Heart right ventricle (tissue), 16 donors: ENCODE measurements at regions of chr16 and their contacts with region 1.

Region 1: DNA sequence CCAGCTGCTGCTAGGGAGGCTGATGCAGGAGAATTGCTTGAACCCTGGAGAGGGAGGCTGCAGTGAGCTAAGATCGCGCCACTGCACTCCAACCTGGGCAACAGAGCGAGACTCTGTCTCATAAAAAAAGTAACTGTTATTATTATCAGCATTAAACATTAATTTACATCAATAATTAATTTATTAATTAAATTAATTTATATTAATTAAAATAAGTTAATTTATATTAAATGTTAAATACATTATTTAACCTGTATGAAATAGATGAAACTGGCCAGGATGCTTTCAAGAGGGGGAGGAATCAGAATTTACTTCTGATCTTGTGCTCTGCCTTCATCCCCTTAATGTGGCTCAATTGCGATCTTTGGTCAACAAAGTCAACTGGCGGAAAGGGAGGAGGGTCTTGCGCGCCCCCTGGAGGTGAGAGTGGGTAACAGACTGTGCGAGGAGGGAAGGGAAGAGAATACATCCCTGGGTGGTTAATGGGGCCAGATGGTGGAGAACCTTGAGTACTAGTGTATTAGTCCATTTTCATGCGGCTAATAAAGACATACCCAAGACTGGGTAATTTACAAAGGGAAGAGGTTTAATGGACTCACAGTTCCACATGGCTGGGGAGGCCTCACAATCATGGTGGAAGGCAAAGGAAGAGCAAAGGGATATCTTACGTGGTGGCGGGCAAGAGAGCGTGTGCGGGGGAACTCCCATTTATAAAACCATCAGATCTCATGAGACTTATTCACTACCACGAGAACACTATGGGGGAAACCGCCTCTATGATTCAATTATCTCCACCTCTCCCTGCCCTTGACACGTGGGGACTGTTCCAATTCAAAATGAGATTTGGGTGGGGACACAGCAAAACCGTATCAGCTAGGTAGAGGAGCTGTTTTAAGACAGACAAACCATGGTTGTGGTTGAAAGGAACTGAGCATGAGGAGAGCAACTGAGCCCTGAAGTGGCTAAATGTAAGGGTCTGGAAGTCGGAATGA is 15.7 kb upstream of the CPPED1 start:
- DNase-seq: peak; percentile 59 to 77
- ATAC-seq: peak in 6 of 8 donors; percentile 13 to 64 (median 42)
- H3K4me3 ChIP-seq: no peak overlapping the region
- H3K27ac ChIP-seq: no peak overlapping the region
- H3K4me1 ChIP-seq: peaks cover 0 to 18% (median 0%) of the 10 kb centered on the region in 9 donors
- H3K27me3 ChIP-seq: no peaks in the 10 kb centered on the region
- CTCF ChIP-seq: peak; percentile 70 to 91 (median 82)

Region 2: DNA sequence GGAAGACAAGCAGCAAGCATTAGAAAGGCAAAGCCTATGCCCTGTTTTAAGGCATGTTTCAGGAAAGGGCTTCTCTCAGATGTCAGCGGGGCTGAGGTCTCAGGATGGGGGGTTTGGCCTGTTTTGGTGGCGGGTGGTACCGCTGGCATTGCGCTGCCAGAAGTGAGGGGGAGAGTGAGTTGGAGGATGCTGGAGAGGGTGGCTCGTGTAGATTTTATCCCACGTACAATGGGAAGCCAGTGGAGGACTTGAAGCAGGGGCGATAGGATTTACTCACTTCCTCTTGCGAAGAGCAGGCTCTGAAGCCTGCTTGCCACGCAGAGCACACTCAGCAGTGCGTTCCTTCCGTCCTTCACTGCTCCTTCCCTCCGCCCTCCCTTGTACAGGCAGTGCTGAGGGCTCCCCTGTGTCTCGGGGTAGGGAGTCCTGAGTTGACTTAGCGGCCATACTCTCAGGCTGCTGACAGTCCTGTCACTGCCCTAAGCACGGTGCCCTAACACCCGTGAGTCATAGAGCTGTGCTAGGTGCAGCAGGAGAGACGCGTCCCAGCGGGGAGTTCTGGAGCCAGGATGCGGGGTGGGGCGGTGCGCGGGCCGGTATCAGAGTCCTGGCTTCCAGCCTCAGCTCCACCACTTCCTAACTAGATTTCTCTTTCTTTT is 729.8 kb before region 1 on chr16:
- intact Hi-C with region 1: loop called in 4 of 10 experiments (anchors 5 to 10 kb)
- DNase-seq: peak; percentile 21 to 42
- ATAC-seq: peak; percentile 44 to 84 (median 72)
- H3K4me3 ChIP-seq: peak overlapping the region in 9 of 10 donors; percentile 17 to 44 (median 36)
- H3K27ac ChIP-seq: peak overlapping the region in 9 of 10 donors; percentile 15 to 75 (median 54)
- H3K4me1 ChIP-seq: peaks cover 10 to 54% (median 26%) of the 10 kb centered on the region in 9 donors
- H3K27me3 ChIP-seq: no peaks in the 10 kb centered on the region
- CTCF ChIP-seq: no peak

Region 3: GRCh38 chr16:12455287-12455798 is 364.1 kb before region 1 on chr16:
- intact Hi-C with region 1: loop called in 9 of 10 experiments (anchors 2 to 5 kb)
- DNase-seq: peak; percentile 40 to 60
- ATAC-seq: peak; percentile 60 to 83 (median 79)
- H3K4me3 ChIP-seq: no peak overlapping the region
- H3K27ac ChIP-seq: no peak overlapping the region
- H3K4me1 ChIP-seq: peaks cover 0 to 18% (median 0%) of the 10 kb centered on the region in 9 donors
- H3K27me3 ChIP-seq: no peaks in the 10 kb centered on the region
- CTCF ChIP-seq: peak; percentile 70 to 96 (median 86)

Region 4: GRCh38 chr16:12573730-12574383 is 245.6 kb before region 1 on chr16:
- intact Hi-C with region 1: loop called in 5 of 10 experiments (anchors 5 to 10 kb)
- DNase-seq: peak; percentile 24 to 42
- ATAC-seq: peak in 1 of 8 donors; percentile 58
- H3K4me3 ChIP-seq: no peak overlapping the region
- H3K27ac ChIP-seq: no peak overlapping the region
- H3K4me1 ChIP-seq: peaks cover 0 to 4% (median 0%) of the 10 kb centered on the region in 9 donors
- H3K27me3 ChIP-seq: no peaks in the 10 kb centered on the region
- CTCF ChIP-seq: peak in 8 of 9 donors; percentile 40 to 70 (median 56)

Region 5: DNA sequence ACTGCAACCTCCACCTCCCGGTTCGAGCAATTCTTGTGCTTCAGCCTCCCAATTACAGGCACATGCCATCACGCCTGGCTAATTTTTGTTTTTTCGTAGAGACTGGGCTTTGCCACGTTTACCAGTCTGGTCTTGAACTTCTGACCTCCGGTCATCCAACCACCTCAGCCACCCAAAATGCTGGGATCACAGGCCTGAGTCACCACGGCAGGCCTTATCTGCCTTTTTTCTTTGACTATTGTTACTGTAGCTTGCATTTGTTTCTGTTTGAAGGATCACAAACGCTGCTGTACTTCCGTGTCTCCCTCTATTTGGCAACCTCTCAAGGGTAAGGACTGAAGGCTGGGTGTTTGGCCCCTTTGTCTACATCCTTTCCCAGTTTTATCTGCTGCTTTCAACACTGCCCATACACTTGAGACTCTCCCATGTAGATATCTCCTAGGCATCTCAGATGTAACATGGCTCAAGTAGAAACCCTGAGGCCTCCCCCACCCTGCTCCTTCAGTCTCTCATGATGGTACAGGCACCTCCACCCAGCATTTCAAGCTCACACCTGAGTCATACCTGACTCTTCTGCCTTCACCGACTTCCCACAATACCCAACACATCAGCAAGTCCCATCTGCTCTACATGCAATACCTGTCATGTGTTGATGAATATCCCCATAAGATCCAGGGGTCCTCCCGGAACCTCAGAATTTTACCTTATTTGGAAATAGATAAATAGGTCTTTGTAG is 234.8 kb before region 1 on chr16:
- intact Hi-C with region 1: loop called in 5 of 10 experiments (anchors 10 kb)
- DNase-seq: no peak
- ATAC-seq: no peak
- H3K4me3 ChIP-seq: no peak overlapping the region
- H3K27ac ChIP-seq: no peak overlapping the region
- H3K4me1 ChIP-seq: no peaks in the 10 kb centered on the region
- H3K27me3 ChIP-seq: peaks cover 0 to 16% (median 4%) of the 10 kb centered on the region in 7 donors
- CTCF ChIP-seq: no peak

Region 6: GRCh38 chr16:12862327-12862726 is 42.9 kb after region 1 on chr16:
- intact Hi-C with region 1: no loop called
- DNase-seq: no peak
- ATAC-seq: no peak
- H3K4me3 ChIP-seq: no peak overlapping the region
- H3K27ac ChIP-seq: no peak overlapping the region
- H3K4me1 ChIP-seq: no peaks in the 10 kb centered on the region
- H3K27me3 ChIP-seq: peaks cover 0 to 8% (median 0%) of the 10 kb centered on the region in 7 donors
- CTCF ChIP-seq: no peak